ENCODE measurements at regions of chr17 and their contacts with region 1.

Region 1: DNA sequence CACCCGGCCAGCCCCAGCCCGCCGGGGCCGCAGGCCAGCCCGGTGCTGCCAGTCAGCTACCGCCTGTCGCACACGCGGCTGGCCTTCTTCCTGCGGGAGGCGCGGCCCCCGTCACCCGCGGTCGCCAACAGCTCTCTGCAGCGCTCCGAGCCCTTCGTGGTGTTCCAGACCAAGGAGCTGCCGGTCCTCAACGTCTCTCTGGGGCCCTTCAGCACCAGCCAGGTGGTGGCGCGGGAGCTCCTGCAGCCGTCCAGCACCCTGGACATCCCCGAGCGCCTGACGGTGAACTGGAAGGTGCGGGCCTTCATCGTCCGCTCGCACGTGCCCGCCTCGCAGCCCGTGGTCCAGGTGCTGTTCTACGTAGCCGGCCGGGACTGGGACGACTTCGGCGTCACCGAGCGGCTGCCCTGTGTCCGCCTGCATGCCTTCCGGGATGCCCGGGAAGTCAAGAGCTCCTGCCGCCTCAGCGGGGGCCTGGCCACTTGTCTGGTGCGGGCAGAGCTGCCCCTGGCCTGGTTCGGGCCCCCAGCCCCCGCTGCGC is 46.8 kb downstream of the TMEM132E start:
- DNase-seq: no peak
- ATAC-seq: peak in 1 of 4 donors; percentile 33
- H3K4me3 ChIP-seq: no peak overlapping the region
- H3K27ac ChIP-seq: no peak overlapping the region
- H3K4me1 ChIP-seq: peaks cover 0 to 9% (median 0%) of the 10 kb centered on the region in 12 donors
- H3K27me3 ChIP-seq: peaks cover 22 to 84% (median 46%) of the 10 kb centered on the region in 9 donors
- CTCF ChIP-seq: peak in 2 of 12 donors; percentile 5 to 10
- POLR2A ChIP-seq: no peak

Region 2: GRCh38 chr17:35119368-35120165 is 493.4 kb after region 1 on chr17 and contains the start of gene RAD51D:
- intact Hi-C with region 1: loop called in 1 of 10 experiments (anchors 10 kb)
- DNase-seq: peak; percentile 67 to 88 (median 73)
- ATAC-seq: peak; percentile 62 to 98 (median 95)
- H3K4me3 ChIP-seq: peak within 1 kb of the TSS; percentile 51 to 99 (median 90)
- H3K27ac ChIP-seq: peak within 1 kb of the TSS in 11 of 12 donors; percentile 8 to 86 (median 75)
- H3K4me1 ChIP-seq: peaks cover 0 to 20% (median 10%) of the 10 kb centered on the region in 12 donors
- H3K27me3 ChIP-seq: no peaks in the 10 kb centered on the region
- CTCF ChIP-seq: peak; percentile 67 to 98 (median 94)
- POLR2A ChIP-seq: peak in 1 of 2 donors; percentile 39
- total RNA-seq, gene RAD51D: 2.7 to 9.2 (median 5.0) TPM

Region 3: GRCh38 chr17:35161281-35161761 is 535.1 kb after region 1 on chr17:
- intact Hi-C with region 1: no loop called
- DNase-seq: no peak
- ATAC-seq: peak in 1 of 4 donors; percentile 18
- H3K4me3 ChIP-seq: no peak overlapping the region
- H3K27ac ChIP-seq: peak overlapping the region in 1 of 12 donors; percentile 70
- H3K4me1 ChIP-seq: peaks cover 0 to 17% (median 0%) of the 10 kb centered on the region in 12 donors
- H3K27me3 ChIP-seq: no peaks in the 10 kb centered on the region
- CTCF ChIP-seq: no peak
- POLR2A ChIP-seq: no peak

Measured in heart left ventricle (tissue), 16 donors.